Pancreas (tissue), 10 donors: ENCODE measurements at regions of chr1 and their contacts with region 1.

Region 1: DNA sequence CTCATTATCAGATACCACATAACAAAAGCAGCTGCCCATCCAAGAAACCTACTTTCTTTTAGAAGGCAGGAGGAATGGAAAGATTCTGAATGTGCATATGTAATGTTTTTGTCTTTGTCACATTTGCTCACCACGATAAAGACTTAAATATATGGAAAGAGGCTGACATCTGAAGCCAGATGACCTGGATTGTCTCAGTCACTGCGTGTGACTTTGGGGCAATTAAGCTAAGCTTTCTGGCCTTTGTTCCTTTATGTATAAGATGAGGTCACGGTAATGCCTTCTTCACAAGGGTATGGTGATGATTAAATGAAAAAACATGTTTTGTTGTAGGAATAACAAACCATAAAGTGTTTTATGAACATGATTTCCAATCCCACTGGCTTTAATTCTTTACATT is 42.6 kb downstream of the LRRC52 start:
- DNase-seq: no peak
- ATAC-seq: no peak
- H3K4me3 ChIP-seq: no peak overlapping the region
- H3K27ac ChIP-seq: no peak overlapping the region
- H3K4me1 ChIP-seq: no peaks in the 10 kb centered on the region
- H3K27me3 ChIP-seq: peaks cover 0 to 5% (median 0%) of the 10 kb centered on the region in 4 donors
- CTCF ChIP-seq: no peak

Region 2: GRCh38 chr1:165392634-165393571 is 193.5 kb before region 1 on chr1:
- intact Hi-C with region 1: loop called in 2 of 3 experiments (anchors 5 kb)
- DNase-seq: peak; percentile 53 to 87 (median 74)
- ATAC-seq: peak; percentile 80 to 99 (median 95)
- H3K4me3 ChIP-seq: peak overlapping the region in 1 of 4 donors; percentile 7
- H3K27ac ChIP-seq: no peak overlapping the region
- H3K4me1 ChIP-seq: no peaks in the 10 kb centered on the region
- H3K27me3 ChIP-seq: no peaks in the 10 kb centered on the region
- CTCF ChIP-seq: peak; percentile 85 to 91 (median 88)

Region 3: GRCh38 chr1:165793951-165794350 is 207.5 kb after region 1 on chr1:
- intact Hi-C with region 1: no loop called
- DNase-seq: no peak
- ATAC-seq: no peak
- H3K4me3 ChIP-seq: no peak overlapping the region
- H3K27ac ChIP-seq: no peak overlapping the region
- H3K4me1 ChIP-seq: no peaks in the 10 kb centered on the region
- H3K27me3 ChIP-seq: no peaks in the 10 kb centered on the region
- CTCF ChIP-seq: no peak